ENCODE measurements at regions of chr5 and their contacts with region 1.

Region 1: GRCh38 chr5:66987949-66988838 is 208.4 kb downstream of the CD180 start:
- DNase-seq: no peak
- ATAC-seq: peak; percentile 70
- H3K4me3 Mint-ChIP-seq: no peak overlapping the region
- H3K27ac Mint-ChIP-seq: no peak overlapping the region
- H3K4me1 Mint-ChIP-seq: peaks cover 6% of the 10 kb centered on the region
- H3K27me3 Mint-ChIP-seq: no peaks in the 10 kb centered on the region
- CTCF ChIP-seq: peak; percentile 57

Region 2: GRCh38 chr5:67003935-67004729 is 15.9 kb after region 1 on chr5:
- CTCF ChIA-PET with region 1: interaction called, 5 read pairs
- POLR2A ChIA-PET with region 1: interaction called, 3 read pairs
- intact Hi-C with region 1: loop called (anchors 1 kb)
- DNase-seq: peak; percentile 66
- ATAC-seq: peak; percentile 79
- H3K4me3 Mint-ChIP-seq: peak overlapping the region; percentile 87
- H3K27ac Mint-ChIP-seq: peak overlapping the region; percentile 72
- H3K4me1 Mint-ChIP-seq: peaks cover 30% of the 10 kb centered on the region
- H3K27me3 Mint-ChIP-seq: no peaks in the 10 kb centered on the region
- CTCF ChIP-seq: no peak